ENCODE measurements at regions of chr14 and their contacts with region 1.

Region 1: DNA sequence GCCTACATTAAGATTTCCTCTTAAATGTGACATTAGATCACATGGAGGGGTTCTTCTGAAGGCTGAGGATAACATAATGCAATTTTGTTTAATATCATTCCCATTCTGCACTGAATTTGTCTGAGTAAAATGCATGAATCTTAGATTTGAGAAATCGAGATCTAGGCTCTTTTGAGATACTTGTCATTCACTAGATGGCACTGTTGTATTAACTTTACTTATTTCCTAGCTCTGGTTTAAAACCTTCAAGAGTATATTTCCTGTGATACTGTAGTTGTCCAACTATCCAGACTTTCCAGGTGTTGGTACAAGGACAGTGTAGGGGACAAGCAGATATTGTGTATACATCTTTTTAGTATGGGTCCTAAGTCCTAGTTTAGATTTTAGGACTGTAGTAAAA is 91.7 kb upstream of the SEL1L start:
- DNase-seq: no peak
- ATAC-seq: peak; percentile 65; the same call in 2 of the 3 replicates
- H3K4me3 ChIP-seq: no peak overlapping the region
- H3K27ac ChIP-seq: no peak overlapping the region
- H3K4me1 ChIP-seq: no peaks in the 10 kb centered on the region
- H3K27me3 ChIP-seq: no peaks in the 10 kb centered on the region
- CTCF ChIP-seq: peak; percentile 23 to 54 (median 35); a peak in 4 of 6 replicates
- EP300 ChIP-seq: no peak
- POLR2A ChIP-seq: no peak
- RAD21 ChIP-seq: peak; percentile 40; the same call in 1 of the 2 replicates

Region 2: DNA sequence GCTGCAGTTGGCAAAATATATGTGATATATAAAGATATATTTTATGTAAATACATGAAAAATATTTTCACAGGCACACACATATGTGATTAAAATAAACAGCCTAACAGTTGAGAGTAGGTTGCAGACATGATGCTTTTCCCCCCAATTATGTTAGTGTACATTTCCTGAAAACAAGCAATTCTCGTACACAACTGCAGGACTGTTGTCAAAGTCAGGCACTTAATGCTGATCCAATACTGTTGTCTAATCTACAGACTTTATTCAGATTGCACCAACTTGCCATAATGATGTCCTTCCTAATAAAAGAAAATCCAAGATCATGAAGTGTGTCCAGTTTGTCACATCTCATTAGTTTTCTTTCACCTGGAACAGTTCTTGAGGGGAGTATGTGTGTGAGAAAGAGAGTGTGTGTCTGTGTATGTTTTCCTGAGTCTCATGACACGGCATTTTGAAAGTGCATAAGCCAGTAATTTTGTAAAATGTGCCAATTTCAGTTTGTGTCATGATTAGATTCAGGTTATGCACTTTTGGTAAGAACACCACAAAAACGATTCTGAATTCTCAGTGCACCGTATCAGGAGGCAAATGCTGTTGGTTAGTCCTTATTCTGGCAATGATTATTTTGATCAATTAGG is 75.2 kb before region 1 on chr14:
- CTCF ChIA-PET with region 1: no interaction called
- POLR2A ChIA-PET with region 1: no interaction called
- RAD21 ChIA-PET with region 1: no interaction called
- SMC1A ChIA-PET with region 1: no interaction called
- in situ Hi-C with region 1: no loop called
- intact Hi-C with region 1: no loop called
- DNase-seq: peak; percentile 81
- ATAC-seq: peak; percentile 97
- H3K4me3 ChIP-seq: peak overlapping the region; percentile 40; the same call in 1 of the 2 replicates
- H3K27ac ChIP-seq: peak overlapping the region; percentile 21
- H3K4me1 ChIP-seq: peaks cover 10% of the 10 kb centered on the region
- H3K27me3 ChIP-seq: no peaks in the 10 kb centered on the region
- CTCF ChIP-seq: no peak
- EP300 ChIP-seq: peak; percentile 61 to 93; a peak in 3 of 4 replicates
- POLR2A ChIP-seq: no peak
- RAD21 ChIP-seq: no peak

Region 3: GRCh38 chr14:81565441-81566290 is 59.7 kb before region 1 on chr14:
- CTCF ChIA-PET with region 1: interaction called, 18 read pairs
- POLR2A ChIA-PET with region 1: no interaction called
- RAD21 ChIA-PET with region 1: interaction called, 8 read pairs
- SMC1A ChIA-PET with region 1: no interaction called
- in situ Hi-C with region 1: no loop called
- intact Hi-C with region 1: no loop called
- DNase-seq: no peak
- ATAC-seq: peak; percentile 81
- H3K4me3 ChIP-seq: no peak overlapping the region
- H3K27ac ChIP-seq: no peak overlapping the region
- H3K4me1 ChIP-seq: no peaks in the 10 kb centered on the region
- H3K27me3 ChIP-seq: peaks cover 0 to 2% of the 10 kb centered on the region in 2 experiments; a peak in 2 of 4 replicates
- CTCF ChIP-seq: peak; percentile 64 to 71 (median 70); a peak in 5 of 6 replicates
- EP300 ChIP-seq: no peak
- POLR2A ChIP-seq: no peak
- RAD21 ChIP-seq: peak; percentile 79

Region 4: DNA sequence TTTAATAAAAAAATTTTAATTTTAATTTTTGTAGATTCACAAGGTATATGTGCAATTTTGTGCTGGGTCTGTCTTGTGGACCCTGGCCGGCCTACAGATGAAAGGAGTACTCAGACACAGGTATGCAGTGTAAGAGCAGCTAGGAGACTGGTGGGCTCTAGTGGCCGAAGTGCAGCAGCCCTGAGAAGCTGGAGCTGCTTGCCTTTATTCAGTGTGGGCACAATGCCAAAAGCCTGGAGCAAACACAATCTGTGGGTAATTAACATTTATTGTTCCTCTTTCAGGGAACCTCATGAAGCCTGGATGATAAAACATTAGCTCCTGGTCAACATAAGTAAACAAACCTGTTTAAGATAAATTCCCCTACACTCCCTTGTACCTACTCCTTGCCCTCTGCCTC is 44.0 kb after region 1 on chr14:
- CTCF ChIA-PET with region 1: no interaction called
- POLR2A ChIA-PET with region 1: no interaction called
- RAD21 ChIA-PET with region 1: no interaction called
- SMC1A ChIA-PET with region 1: no interaction called
- in situ Hi-C with region 1: no loop called
- intact Hi-C with region 1: no loop called
- DNase-seq: no peak
- ATAC-seq: no peak
- H3K4me3 ChIP-seq: no peak overlapping the region
- H3K27ac ChIP-seq: no peak overlapping the region
- H3K4me1 ChIP-seq: no peaks in the 10 kb centered on the region
- H3K27me3 ChIP-seq: no peaks in the 10 kb centered on the region
- CTCF ChIP-seq: no peak
- EP300 ChIP-seq: no peak
- POLR2A ChIP-seq: no peak
- RAD21 ChIP-seq: no peak

Region 5: DNA sequence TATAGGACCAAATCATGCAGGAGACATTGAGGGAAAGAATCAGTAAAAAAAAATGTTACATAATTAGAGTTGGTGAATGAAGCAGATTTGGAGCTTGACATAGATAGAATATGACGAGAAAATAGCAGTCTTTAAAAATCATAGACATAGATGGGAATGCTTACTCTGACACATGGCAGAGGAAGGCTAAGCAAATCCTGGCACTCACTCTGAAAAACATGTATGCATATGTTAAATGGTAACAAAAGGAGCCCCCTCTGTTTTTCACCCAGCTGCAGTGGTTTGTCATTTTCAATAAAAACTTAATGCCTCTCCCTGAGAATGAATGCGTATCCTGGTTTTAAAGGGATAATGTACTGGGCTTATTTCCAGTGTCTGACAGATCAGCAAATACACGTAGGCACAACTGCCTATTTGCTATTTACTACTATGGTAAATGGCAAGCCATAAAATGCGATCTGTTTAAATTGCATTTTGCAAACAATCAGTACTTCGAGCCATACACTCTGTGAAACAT is 469.5 kb after region 1 on chr14:
- CTCF ChIA-PET with region 1: no interaction called
- POLR2A ChIA-PET with region 1: no interaction called
- RAD21 ChIA-PET with region 1: no interaction called
- SMC1A ChIA-PET with region 1: no interaction called
- in situ Hi-C with region 1: no loop called
- intact Hi-C with region 1: no loop called
- DNase-seq: no peak
- ATAC-seq: no peak
- H3K4me3 ChIP-seq: no peak overlapping the region
- H3K27ac ChIP-seq: no peak overlapping the region
- H3K4me1 ChIP-seq: no peaks in the 10 kb centered on the region
- H3K27me3 ChIP-seq: no peaks in the 10 kb centered on the region
- CTCF ChIP-seq: no peak
- EP300 ChIP-seq: no peak
- POLR2A ChIP-seq: no peak
- RAD21 ChIP-seq: no peak

Region 6: GRCh38 chr14:82298811-82299210 is 673.5 kb after region 1 on chr14:
- CTCF ChIA-PET with region 1: no interaction called
- POLR2A ChIA-PET with region 1: no interaction called
- RAD21 ChIA-PET with region 1: no interaction called
- SMC1A ChIA-PET with region 1: no interaction called
- in situ Hi-C with region 1: no loop called
- intact Hi-C with region 1: no loop called
- DNase-seq: no peak
- ATAC-seq: no peak
- H3K4me3 ChIP-seq: no peak overlapping the region
- H3K27ac ChIP-seq: no peak overlapping the region
- H3K4me1 ChIP-seq: no peaks in the 10 kb centered on the region
- H3K27me3 ChIP-seq: no peaks in the 10 kb centered on the region
- CTCF ChIP-seq: no peak
- EP300 ChIP-seq: no peak
- POLR2A ChIP-seq: no peak
- RAD21 ChIP-seq: no peak

Measured in GM12878 (cell line).